Gastrocnemius medialis (tissue), 4 donors: ENCODE measurements at regions of chr7 and their contacts with region 1.

Region 1: DNA sequence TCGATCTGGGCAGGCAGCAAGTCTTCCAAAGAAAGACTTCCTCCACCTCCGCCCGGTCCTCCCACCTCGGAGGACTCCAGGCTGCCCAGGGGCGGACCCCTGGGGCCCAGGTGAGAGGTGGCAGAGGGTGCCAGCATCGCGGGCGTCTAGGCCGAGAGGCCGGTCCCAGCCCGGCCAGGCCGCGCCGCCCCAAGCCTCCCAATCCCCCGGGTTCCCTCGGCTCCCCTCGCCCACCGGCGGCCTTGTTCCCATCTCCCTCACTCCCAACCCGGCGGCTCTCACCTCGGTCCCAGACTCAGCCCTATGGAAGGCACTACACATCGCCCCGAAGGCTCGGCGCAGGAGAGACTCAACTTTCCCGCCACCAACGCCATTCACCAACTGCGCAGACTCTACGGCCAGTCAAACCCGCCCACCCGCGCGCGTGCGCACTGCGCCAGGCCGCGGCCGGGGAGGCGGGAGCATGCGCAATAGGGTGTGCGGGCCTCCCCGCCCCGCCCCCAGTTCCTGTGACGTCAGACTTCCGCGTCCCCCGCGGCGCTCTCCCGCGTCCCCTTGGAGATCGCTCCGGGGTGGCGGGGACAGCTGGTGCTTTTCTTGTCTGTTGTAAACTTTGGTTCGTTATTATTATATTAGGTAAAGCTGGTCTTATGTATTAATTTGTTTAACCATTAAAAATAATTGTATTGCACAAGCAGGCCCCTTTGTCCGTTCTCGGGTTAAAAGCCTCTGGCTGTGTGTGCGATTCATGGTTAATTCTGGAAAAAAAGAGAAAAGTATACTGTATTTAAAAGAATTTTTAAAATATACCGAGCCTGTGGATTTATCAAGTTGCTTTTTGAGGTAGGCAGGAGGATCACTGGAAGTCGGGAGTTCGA is at the start of gene XRCC2:
- DNase-seq: peak; percentile 81 to 86
- ATAC-seq: peak; percentile 99
- H3K4me3 ChIP-seq: peak within 1 kb of the TSS; percentile 67 to 78 (median 70)
- H3K27ac ChIP-seq: peak within 1 kb of the TSS; percentile 85 to 87 (median 86)
- H3K4me1 ChIP-seq: peaks cover 7 to 12% of the 10 kb centered on the region in 2 donors
- H3K27me3 ChIP-seq: no peaks in the 10 kb centered on the region
- CTCF ChIP-seq: no peak
- POLR2A ChIP-seq: peak; percentile 56 to 68
- total RNA-seq, gene XRCC2: 0.07 to 0.41 (median 0.20) TPM in 3 of 4 donors, not detected in the other

Region 2: GRCh38 chr7:152643979-152644559 is 31.9 kb before region 1 on chr7:
- in situ Hi-C with region 1: no loop called
- intact Hi-C with region 1: no loop called
- DNase-seq: no peak
- ATAC-seq: no peak
- H3K4me3 ChIP-seq: no peak overlapping the region
- H3K27ac ChIP-seq: no peak overlapping the region
- H3K4me1 ChIP-seq: no peaks in the 10 kb centered on the region
- H3K27me3 ChIP-seq: no peaks in the 10 kb centered on the region
- CTCF ChIP-seq: no peak
- POLR2A ChIP-seq: no peak

Region 3: GRCh38 chr7:152699121-152699660 is 23.2 kb after region 1 on chr7:
- in situ Hi-C with region 1: no loop called
- intact Hi-C with region 1: loop called (anchors 1 kb)
- DNase-seq: no peak
- ATAC-seq: no peak
- H3K4me3 ChIP-seq: peak overlapping the region; percentile 18 to 51 (median 32)
- H3K27ac ChIP-seq: peak overlapping the region; percentile 81 to 86 (median 83)
- H3K4me1 ChIP-seq: peaks cover 15 to 16% of the 10 kb centered on the region in 2 donors
- H3K27me3 ChIP-seq: no peaks in the 10 kb centered on the region
- CTCF ChIP-seq: no peak
- POLR2A ChIP-seq: no peak

Region 4: GRCh38 chr7:152759949-152760853 is 84.2 kb after region 1 on chr7:
- in situ Hi-C with region 1: no loop called
- intact Hi-C with region 1: loop called (anchors 1 kb)
- DNase-seq: peak; percentile 10 to 34
- ATAC-seq: peak; percentile 59 to 69
- H3K4me3 ChIP-seq: peak overlapping the region; percentile 79 to 96 (median 86)
- H3K27ac ChIP-seq: peak overlapping the region; percentile 94 to 100 (median 98)
- H3K4me1 ChIP-seq: peaks cover 23 to 25% of the 10 kb centered on the region in 2 donors
- H3K27me3 ChIP-seq: no peaks in the 10 kb centered on the region
- CTCF ChIP-seq: no peak
- POLR2A ChIP-seq: peak in 1 of 2 donors; percentile 41